Prostate gland (tissue), 2 donors: ENCODE measurements at regions of chr12 and their contacts with region 1.

Region 1: GRCh38 chr12:22631863-22632463 is 7.0 kb downstream of the ETNK1 start:
- DNase-seq: no peak
- H3K4me3 ChIP-seq: no peak overlapping the region
- H3K27ac ChIP-seq: no peak overlapping the region
- H3K4me1 ChIP-seq: no peaks in the 10 kb centered on the region
- H3K27me3 ChIP-seq: no peaks in the 10 kb centered on the region
- CTCF ChIP-seq: peak in 3 of 4 experiments; percentile 45 to 50 (median 46)
- POLR2A ChIP-seq: no peak

Region 2: DNA sequence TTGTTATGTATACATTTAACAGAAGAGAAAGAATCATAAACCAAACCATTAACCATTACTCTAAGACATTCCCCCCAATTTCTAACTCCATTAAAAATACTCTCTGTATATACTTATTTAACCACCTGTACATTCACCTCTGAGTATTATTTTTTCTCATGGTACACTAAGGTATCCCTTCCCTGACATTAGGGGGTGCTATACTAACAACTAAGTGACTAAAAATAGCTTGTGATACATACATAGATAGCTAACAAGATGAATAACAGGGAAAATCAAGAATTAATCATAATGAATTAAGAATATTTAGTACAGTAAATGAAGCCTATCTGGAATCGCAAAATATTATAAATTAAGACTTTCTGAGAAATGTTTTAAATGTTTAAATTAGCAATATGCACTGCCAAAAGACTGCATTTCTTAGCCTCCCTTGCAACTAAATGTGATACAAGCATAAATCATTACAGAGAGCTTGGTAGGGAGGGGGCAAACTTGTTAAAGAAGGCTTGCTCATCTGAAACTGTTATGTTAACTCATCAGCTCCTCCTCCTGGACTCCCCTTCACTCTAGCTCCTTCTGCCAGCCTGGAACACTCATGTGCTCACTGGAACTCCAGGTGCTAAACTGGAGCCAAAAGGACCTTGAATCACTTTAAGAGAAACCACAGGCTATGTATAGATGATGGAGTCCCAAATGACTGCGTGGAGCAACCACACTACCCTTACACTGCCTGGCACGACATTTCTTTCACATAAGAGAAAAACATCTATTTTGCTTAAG is 102.5 kb before region 1 on chr12:
- intact Hi-C with region 1: loop called (anchors 5 kb)
- DNase-seq: no peak
- H3K4me3 ChIP-seq: no peak overlapping the region
- H3K27ac ChIP-seq: no peak overlapping the region
- H3K4me1 ChIP-seq: no peaks in the 10 kb centered on the region
- H3K27me3 ChIP-seq: no peaks in the 10 kb centered on the region
- CTCF ChIP-seq: peak in 3 of 4 experiments; percentile 36 to 51 (median 40)
- POLR2A ChIP-seq: no peak